ENCODE measurements at regions of chr6 and their contacts with region 1.

Region 1: GRCh38 chr6:27132532-27133280 is 114.8 kb upstream of the PRSS16 start:
- DNase-seq: peak; percentile 77
- ATAC-seq: peak; percentile 84
- H3K4me3 Mint-ChIP-seq: no peak overlapping the region
- H3K27ac Mint-ChIP-seq: no peak overlapping the region
- H3K4me1 Mint-ChIP-seq: peaks cover 14% of the 10 kb centered on the region
- H3K27me3 Mint-ChIP-seq: no peaks in the 10 kb centered on the region
- CTCF ChIP-seq: no peak

Region 2: GRCh38 chr6:26054857-26055669 is 1077.6 kb before region 1 on chr6:
- CTCF ChIA-PET with region 1: no interaction called
- POLR2A ChIA-PET with region 1: interaction called, 19 read pairs
- intact Hi-C with region 1: no loop called
- DNase-seq: peak; percentile 63
- ATAC-seq: peak; percentile 65
- H3K4me3 Mint-ChIP-seq: peak overlapping the region; percentile 97
- H3K27ac Mint-ChIP-seq: peak overlapping the region; percentile 100
- H3K4me1 Mint-ChIP-seq: peaks cover 20% of the 10 kb centered on the region
- H3K27me3 Mint-ChIP-seq: no peaks in the 10 kb centered on the region
- CTCF ChIP-seq: no peak

Region 3: DNA sequence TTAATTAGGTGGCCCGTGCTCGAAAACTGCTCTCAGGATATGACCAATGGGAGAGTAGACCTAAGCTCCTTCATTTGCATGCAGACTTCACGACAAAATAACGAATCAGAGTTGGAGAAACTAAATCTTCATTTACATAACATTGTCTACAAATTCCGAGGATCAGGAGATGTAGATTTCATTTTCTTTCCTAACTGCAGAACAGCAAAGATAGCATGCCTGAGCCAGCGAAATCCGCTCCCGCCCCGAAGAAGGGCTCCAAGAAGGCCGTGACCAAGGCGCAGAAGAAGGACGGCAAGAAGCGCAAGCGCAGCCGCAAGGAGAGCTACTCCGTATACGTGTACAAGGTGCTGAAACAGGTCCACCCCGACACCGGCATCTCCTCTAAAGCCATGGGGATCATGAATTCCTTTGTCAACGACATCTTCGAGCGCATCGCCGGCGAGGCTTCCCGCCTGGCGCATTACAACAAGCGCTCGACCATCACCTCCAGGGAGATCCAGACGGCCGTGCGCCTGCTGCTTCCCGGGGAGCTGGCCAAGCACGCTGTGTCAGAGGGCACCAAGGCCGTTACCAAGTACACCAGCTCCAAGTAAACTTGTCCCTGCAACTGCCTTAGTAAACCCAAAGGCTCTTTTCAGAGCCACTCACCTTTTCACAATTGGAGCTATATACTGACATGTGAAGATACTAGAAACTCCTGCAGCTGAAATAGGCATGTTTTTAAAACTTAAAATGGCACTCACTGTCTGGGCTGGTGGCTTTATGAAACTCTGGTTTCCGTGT is 948.9 kb before region 1 on chr6:
- CTCF ChIA-PET with region 1: no interaction called
- POLR2A ChIA-PET with region 1: interaction called, 16 read pairs
- intact Hi-C with region 1: loop called (anchors 2 kb)
- DNase-seq: peak; percentile 60
- ATAC-seq: peak; percentile 86
- H3K4me3 Mint-ChIP-seq: peak overlapping the region; percentile 98
- H3K27ac Mint-ChIP-seq: peak overlapping the region; percentile 91
- H3K4me1 Mint-ChIP-seq: peaks cover 30% of the 10 kb centered on the region
- H3K27me3 Mint-ChIP-seq: no peaks in the 10 kb centered on the region
- CTCF ChIP-seq: no peak

Region 4: DNA sequence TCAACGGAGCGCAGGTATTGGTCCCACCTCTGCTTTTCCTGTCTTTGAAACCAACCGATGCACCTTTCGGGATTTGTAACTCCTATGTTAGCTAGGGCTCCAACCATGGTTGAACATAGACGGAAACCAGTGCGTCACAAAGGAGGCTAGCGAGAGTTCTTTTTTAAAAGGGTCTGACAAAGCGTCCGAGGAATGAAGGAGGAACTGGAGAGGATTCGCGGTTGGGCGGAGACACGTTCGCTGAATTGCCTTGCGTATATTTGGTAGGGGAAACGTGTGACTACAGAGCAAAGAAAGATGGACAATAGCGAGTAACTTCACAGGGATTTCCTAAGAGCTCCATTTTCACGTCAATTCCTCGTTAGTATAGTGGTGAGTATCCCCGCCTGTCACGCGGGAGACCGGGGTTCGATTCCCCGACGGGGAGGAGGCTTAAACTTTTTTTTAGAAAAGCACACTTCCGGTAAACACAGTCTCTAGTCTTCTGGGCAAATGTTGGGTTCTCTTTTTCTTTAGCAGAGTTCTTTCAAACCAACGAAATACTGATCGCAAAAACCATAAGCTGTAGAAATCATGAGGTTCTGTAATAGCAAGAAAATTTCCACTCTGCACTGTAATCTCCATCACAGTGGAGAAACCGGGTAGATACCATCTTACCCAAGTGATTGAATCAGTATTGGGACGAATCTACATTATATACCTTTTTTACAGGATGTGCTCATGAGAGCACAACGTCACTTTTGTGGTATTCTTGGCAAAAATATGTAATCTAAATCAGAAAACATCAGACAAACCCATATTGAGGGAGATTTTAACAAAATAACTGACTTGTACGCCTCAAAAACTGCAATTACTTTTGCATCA is 346.8 kb after region 1 on chr6:
- CTCF ChIA-PET with region 1: no interaction called
- POLR2A ChIA-PET with region 1: interaction called, 20 read pairs
- intact Hi-C with region 1: loop called (anchors 2 kb)
- DNase-seq: peak; percentile 84
- ATAC-seq: peak; percentile 76
- H3K4me3 Mint-ChIP-seq: no peak overlapping the region
- H3K27ac Mint-ChIP-seq: no peak overlapping the region
- H3K4me1 Mint-ChIP-seq: peaks cover 9% of the 10 kb centered on the region
- H3K27me3 Mint-ChIP-seq: no peaks in the 10 kb centered on the region
- CTCF ChIP-seq: no peak

Region 5: GRCh38 chr6:27871924-27872638 is 739.4 kb after region 1 on chr6:
- CTCF ChIA-PET with region 1: no interaction called
- POLR2A ChIA-PET with region 1: interaction called, 40 read pairs
- intact Hi-C with region 1: loop called (anchors 2 kb)
- DNase-seq: peak; percentile 73
- ATAC-seq: peak; percentile 80
- H3K4me3 Mint-ChIP-seq: peak overlapping the region; percentile 94
- H3K27ac Mint-ChIP-seq: peak overlapping the region; percentile 95
- H3K4me1 Mint-ChIP-seq: peaks cover 36% of the 10 kb centered on the region
- H3K27me3 Mint-ChIP-seq: no peaks in the 10 kb centered on the region
- CTCF ChIP-seq: no peak

Region 6: DNA sequence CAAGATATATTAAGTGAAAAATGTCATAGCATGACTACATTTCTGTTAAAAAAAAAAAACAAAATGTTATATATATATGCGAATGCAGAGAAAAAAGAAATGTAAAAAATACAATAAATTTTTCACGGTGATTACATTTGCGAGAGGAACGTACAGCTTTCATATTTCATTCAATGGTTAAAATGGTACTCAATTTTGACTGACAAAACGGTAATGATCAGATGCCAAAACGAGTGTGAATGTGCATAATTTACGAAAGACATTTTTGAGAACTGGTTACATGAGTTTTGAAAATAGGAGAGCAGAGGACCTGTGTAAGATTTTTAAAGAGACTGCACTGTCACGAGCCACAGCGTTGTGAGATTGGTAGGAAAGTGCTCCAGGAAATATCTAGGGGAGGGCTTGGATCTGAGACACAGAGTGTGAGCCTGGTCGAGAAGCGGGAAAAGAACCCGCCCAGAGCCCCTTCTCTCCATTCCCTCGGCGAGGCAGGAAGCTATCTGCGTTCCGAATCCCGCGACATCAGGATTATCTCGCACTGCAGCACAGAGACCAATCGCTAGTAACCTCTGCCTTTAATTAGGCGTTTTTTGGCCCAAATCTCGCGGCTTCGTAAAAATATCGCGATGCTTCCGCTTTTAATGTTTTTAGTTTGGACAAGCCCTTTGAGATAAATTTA is 1762.6 kb after region 1 on chr6:
- CTCF ChIA-PET with region 1: no interaction called
- POLR2A ChIA-PET with region 1: interaction called, 9 read pairs
- intact Hi-C with region 1: loop called (anchors 1 kb)
- DNase-seq: peak; percentile 66
- ATAC-seq: peak; percentile 66
- H3K4me3 Mint-ChIP-seq: peak overlapping the region; percentile 97
- H3K27ac Mint-ChIP-seq: peak overlapping the region; percentile 99
- H3K4me1 Mint-ChIP-seq: peaks cover 23% of the 10 kb centered on the region
- H3K27me3 Mint-ChIP-seq: peaks cover 3% of the 10 kb centered on the region
- CTCF ChIP-seq: no peak

Measured in activated B cell treated with CpG ODN at 0.5 μM for 24 hours (primary cell).